ENCODE measurements at regions of chr3 and their contacts with region 1.

Region 1: GRCh38 chr3:48918388-48919214 is at the start of gene ARIH2:
- DNase-seq: peak; percentile 93
- ATAC-seq: peak; percentile 80
- H3K4me3 Mint-ChIP-seq: peak within 1 kb of the TSS; percentile 96
- H3K27ac Mint-ChIP-seq: peak within 1 kb of the TSS; percentile 99
- H3K4me1 Mint-ChIP-seq: peaks cover 23% of the 10 kb centered on the region
- H3K27me3 Mint-ChIP-seq: no peaks in the 10 kb centered on the region
- total RNA-seq, gene ARIH2: 108 to 118 TPM

Region 2: GRCh38 chr3:48847504-48848423 is 70.8 kb before region 1 on chr3 and contains the start of gene PRKAR2A:
- POLR2A ChIA-PET with region 1: interaction called, 13 read pairs
- DNase-seq: peak; percentile 86
- ATAC-seq: peak; percentile 82
- H3K4me3 Mint-ChIP-seq: peak within 1 kb of the TSS; percentile 74
- H3K27ac Mint-ChIP-seq: peak within 1 kb of the TSS; percentile 87
- H3K4me1 Mint-ChIP-seq: peaks cover 18% of the 10 kb centered on the region
- H3K27me3 Mint-ChIP-seq: no peaks in the 10 kb centered on the region
- total RNA-seq, gene PRKAR2A: 37.0 to 37.6 TPM

Region 3: GRCh38 chr3:48898383-48899234 is 20.0 kb before region 1 on chr3 and contains the start of gene SLC25A20:
- POLR2A ChIA-PET with region 1: interaction called, 69 read pairs
- DNase-seq: peak; percentile 96
- ATAC-seq: peak; percentile 93
- H3K4me3 Mint-ChIP-seq: peak within 1 kb of the TSS; percentile 95
- H3K27ac Mint-ChIP-seq: peak within 1 kb of the TSS; percentile 93
- H3K4me1 Mint-ChIP-seq: peaks cover 35% of the 10 kb centered on the region
- H3K27me3 Mint-ChIP-seq: no peaks in the 10 kb centered on the region
- total RNA-seq, gene SLC25A20: 27.5 to 28.3 TPM

Region 4: DNA sequence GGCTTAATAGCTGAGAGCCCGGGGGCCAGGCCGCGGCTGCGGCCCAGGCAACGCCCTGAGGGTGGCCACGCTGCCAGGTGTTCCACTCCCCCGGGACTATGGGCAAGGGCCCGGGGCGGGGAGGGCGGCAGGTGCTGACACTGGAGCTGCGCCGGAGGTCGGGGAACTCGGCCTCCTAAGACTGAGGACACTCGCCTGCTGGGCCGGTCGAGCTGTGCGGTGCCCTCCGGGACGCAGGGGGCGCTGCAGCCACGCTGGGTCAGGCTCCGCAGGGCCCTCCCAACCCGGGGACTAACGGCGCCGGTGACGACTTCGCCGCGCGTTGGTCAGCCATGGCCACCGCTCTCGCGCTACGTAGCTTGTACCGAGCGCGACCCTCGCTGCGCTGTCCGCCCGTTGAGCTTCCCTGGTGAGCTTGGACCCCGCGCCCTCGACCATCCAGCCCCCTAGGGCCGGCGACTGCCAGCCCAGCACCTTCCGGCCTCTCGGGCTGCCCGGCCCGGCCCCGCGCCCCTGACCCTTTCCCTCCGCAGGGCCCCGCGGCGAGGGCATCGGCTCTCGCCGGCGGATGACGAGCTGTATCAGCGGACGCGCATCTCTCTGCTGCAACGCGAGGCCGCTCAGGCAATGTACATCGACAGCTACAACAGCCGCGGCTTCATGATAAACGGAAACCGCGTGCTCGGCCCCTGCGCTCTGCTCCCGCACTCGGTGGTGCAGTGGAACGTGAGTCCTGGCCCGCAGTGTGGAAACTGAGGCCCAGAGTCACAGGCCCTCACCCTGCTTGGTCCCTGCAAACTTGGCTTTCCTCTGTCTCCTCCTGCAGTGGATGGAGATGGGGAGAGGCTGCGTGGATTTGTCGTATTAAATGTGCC is 103.4 kb after region 1 on chr3 and contains the start of gene NDUFAF3:
- POLR2A ChIA-PET with region 1: interaction called, 18 read pairs
- DNase-seq: peak; percentile 95
- ATAC-seq: peak; percentile 71
- H3K4me3 Mint-ChIP-seq: peak within 1 kb of the TSS; percentile 96
- H3K27ac Mint-ChIP-seq: peak within 1 kb of the TSS; percentile 98
- H3K4me1 Mint-ChIP-seq: peaks cover 31% of the 10 kb centered on the region
- H3K27me3 Mint-ChIP-seq: no peaks in the 10 kb centered on the region
- total RNA-seq, gene NDUFAF3: 78.9 to 82.4 TPM